Heart right ventricle (tissue), 16 donors: ENCODE measurements at regions of chr5 and their contacts with region 1.

Region 1: DNA sequence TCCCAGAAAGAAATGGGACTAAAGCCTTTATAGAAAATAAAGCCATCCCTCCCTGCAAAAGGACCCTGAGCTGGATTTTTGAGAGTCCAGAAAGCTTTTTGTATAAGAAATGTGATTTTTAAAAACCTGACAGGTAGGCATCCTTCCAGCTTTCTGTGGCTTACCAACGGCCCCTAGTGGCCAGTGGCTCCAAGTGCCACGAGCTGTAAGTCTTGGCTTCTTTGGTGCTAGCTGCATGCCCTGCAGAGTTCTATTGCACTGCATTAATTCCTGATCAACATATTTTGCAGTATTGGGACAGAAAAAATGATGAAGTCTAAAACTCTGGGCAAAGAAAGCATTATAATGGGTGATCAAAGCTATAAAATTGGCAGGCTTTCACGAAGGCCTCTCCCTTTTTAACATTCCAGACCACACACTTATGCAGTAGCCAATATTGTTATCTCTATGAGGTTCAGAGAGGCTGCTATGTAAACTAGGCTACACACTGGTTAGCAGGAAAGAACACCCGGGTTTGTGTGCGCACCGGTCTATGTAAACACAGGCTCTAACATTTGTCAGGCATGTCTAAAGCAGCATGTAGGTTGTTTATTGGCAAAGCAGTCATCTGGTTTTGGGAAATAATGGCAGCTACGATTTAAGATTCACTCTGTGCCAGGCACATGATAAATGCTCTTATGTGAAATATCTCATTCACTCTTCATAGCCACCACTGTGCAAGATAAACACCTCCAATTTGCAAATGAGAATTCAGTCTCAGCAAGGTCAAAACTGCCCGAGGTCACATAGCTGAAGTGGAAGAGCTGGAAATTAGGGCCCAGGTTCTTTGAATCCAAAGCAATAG is 55.2 kb downstream of the NMUR2 start:
- DNase-seq: peak; percentile 10 to 28
- ATAC-seq: peak in 6 of 8 donors; percentile 50 to 85 (median 72)
- H3K4me3 ChIP-seq: no peak overlapping the region
- H3K27ac ChIP-seq: peak overlapping the region in 1 of 10 donors; percentile 20
- H3K4me1 ChIP-seq: peaks cover 0 to 11% (median 5%) of the 10 kb centered on the region in 9 donors
- H3K27me3 ChIP-seq: no peaks in the 10 kb centered on the region
- CTCF ChIP-seq: peak; percentile 59 to 83 (median 76)

Region 2: DNA sequence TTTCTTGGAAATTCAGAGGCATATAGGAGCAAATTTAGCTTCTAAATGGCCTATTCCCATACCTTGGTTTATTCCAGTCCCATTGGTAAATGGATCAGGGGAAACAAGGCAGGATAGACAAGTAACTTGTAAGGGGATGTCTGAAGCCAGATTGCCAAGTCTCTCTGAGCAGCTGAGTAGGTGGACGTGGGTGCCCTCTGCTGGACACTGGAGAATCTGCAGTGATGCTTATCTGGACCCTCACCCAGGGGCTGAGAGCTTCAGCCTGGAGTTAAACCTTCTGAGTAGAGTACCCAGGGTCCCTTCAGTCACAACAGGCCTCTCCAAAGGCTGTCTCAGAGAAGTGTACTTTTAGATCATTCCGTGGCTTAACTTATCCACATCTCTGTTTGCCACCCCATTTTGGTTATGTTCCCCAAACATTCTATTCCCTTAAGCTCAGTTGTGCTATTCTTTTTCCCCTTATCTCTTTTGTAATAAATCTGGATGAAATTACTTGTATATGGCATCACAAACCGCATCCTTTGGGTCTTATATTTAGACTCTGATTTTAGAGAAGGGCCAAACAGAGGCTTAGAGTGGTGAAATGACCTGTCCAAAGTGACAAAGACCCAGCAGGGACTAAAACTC is 206.9 kb before region 1 on chr5:
- intact Hi-C with region 1: loop called in 1 of 10 experiments (anchors 10 kb)
- DNase-seq: peak; percentile 29 to 40
- ATAC-seq: peak in 7 of 8 donors; percentile 55 to 83 (median 64)
- H3K4me3 ChIP-seq: no peak overlapping the region
- H3K27ac ChIP-seq: no peak overlapping the region
- H3K4me1 ChIP-seq: peaks cover 0 to 5% (median 0%) of the 10 kb centered on the region in 9 donors
- H3K27me3 ChIP-seq: peaks cover 0 to 4% (median 0%) of the 10 kb centered on the region in 7 donors
- CTCF ChIP-seq: peak; percentile 66 to 92 (median 87)

Region 3: DNA sequence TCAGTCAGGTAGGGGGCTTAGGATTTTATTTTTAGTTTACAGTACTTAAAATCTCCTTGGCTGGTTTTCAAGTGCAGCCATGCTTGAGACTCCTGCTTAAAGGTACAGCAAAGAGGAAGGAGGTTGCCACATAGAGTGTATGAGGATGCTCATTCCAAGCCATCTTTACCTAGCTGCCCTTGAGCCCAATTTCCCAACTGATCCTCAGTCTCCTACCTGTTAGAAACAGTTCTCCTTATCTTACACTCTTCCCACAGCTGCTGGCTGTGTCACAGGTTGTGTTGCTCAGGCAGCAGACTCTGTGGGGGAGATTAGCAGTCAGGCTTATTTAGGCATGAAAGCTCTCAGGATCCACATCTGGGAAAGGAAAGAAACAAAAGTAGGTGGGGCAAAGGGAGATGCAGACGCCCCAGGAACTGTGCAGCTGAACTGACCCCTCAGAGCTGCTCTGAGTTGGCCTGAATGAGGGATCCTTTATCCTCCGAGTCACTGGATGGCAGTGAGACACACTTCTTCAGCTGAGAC is 39.9 kb before region 1 on chr5:
- intact Hi-C with region 1: no loop called
- DNase-seq: no peak
- ATAC-seq: no peak
- H3K4me3 ChIP-seq: no peak overlapping the region
- H3K27ac ChIP-seq: no peak overlapping the region
- H3K4me1 ChIP-seq: no peaks in the 10 kb centered on the region
- H3K27me3 ChIP-seq: peaks cover 0 to 3% (median 0%) of the 10 kb centered on the region in 7 donors
- CTCF ChIP-seq: no peak